ENCODE measurements at regions of chr15 and their contacts with region 1.

Region 1: GRCh38 chr15:35243758-35244157 is 158.7 kb upstream of the NANOGP8 start:
- DNase-seq: no peak
- H3K4me3 Mint-ChIP-seq: no peak overlapping the region
- H3K27ac Mint-ChIP-seq: no peak overlapping the region
- H3K4me1 Mint-ChIP-seq: no peaks in the 10 kb centered on the region
- H3K27me3 Mint-ChIP-seq: no peaks in the 10 kb centered on the region

Region 2: GRCh38 chr15:35218215-35218614 is 25.5 kb before region 1 on chr15:
- intact Hi-C with region 1: loop called (anchors 2 kb)
- DNase-seq: no peak
- H3K4me3 Mint-ChIP-seq: no peak overlapping the region
- H3K27ac Mint-ChIP-seq: no peak overlapping the region
- H3K4me1 Mint-ChIP-seq: no peaks in the 10 kb centered on the region
- H3K27me3 Mint-ChIP-seq: no peaks in the 10 kb centered on the region

Measured in activated CD4-positive, alpha-beta T cell treated with anti-CD3 and anti-CD28 coated beads, Interleukin-2, amount 10 ng/mL, durations not matched to agents 24 days and 14 days (primary cell).